Left lung (tissue), 14 donors: ENCODE measurements at regions of chr15 and their contacts with region 1.

Region 1: DNA sequence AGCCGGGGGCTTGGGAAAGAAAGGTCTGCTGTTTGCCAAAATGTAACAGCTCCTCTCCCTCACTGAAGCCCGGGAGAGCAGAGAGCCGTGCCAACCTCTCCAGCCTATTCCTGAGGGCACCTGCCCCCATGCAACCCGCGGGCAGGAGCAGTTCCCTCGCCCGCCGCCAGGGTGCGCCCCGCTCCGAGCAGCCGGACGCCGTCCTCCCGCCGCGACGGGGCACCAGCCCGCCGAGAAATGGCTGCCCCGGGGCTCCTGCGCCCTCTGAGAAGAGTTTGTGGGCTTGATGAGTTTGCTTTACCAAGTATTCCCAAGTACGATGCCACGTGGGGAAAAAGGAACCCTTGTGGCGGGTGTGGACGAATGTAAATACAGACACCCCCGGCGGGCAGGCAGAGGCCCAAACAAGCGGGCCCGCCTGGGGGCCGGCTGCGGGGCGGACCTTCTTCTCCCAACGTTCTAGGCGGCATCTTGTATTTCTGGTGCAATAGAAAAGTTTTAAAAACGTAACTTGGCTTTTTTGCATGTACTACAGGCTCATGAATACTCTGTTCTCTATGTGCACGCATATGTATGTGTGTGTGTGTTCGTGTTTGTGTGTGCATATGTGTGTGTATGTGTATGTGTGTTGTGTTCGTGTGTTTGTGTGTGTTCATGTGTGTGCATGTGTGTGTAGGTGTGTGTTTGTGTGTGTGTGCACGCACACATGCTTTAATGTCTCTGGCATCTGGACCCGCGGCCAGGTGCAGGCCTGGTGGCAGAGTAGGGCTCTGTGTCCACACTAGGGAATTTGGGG is 162.9 kb downstream of the CHSY1 start:
- DNase-seq: peak in 3 of 4 donors; percentile 68 to 98 (median 73)
- ATAC-seq: peak; percentile 95
- H3K4me3 ChIP-seq: no peak overlapping the region
- H3K27ac ChIP-seq: peak overlapping the region in 1 of 2 donors; percentile 69
- H3K4me1 ChIP-seq: peaks cover 26 to 36% of the 10 kb centered on the region in 2 donors
- H3K27me3 ChIP-seq: no peaks in the 10 kb centered on the region
- CTCF ChIP-seq: peak; percentile 100

Region 2: DNA sequence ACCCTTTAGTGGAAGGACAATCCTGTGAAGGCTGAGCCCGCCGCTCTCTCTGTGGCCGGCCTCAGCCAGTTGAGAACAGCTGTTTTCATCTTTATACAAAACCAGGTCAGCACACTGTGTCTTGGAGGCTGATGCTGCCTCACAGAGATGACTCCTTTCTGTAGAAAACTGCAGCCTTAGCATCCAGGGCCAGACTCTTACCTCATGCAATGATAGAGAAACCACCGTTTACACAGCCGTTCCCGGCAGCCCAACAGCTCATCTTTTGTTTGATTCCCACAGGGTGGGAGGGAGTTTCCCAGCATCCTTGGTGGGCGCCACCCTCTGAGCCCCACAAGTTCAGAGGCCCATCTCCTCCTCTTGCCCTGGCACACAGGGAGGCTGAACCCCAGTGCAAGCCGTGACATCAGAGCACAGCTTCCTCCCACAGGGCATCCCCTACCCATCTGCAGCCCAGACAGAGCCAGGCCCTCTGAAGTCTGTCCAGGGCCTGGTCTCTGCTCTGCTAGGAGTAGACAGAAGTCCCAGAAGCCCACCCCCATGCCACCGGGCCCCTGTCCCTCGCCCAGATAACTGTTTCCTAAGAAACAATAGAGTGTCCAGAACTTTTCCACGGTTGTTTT is 64.8 kb before region 1 on chr15:
- intact Hi-C with region 1: loop called in 1 of 2 experiments (anchors 10 kb)
- DNase-seq: peak in 3 of 4 donors; percentile 45 to 79 (median 57)
- ATAC-seq: peak; percentile 80
- H3K4me3 ChIP-seq: no peak overlapping the region
- H3K27ac ChIP-seq: peak overlapping the region; percentile 37 to 80
- H3K4me1 ChIP-seq: peaks cover 0 to 25% of the 10 kb centered on the region in 2 donors
- H3K27me3 ChIP-seq: no peaks in the 10 kb centered on the region
- CTCF ChIP-seq: no peak

Region 3: GRCh38 chr15:101148166-101148880 is 59.3 kb after region 1 on chr15:
- intact Hi-C with region 1: no loop called
- DNase-seq: peak in 1 of 4 donors; percentile 52
- ATAC-seq: no peak
- H3K4me3 ChIP-seq: no peak overlapping the region
- H3K27ac ChIP-seq: no peak overlapping the region
- H3K4me1 ChIP-seq: peaks cover 0 to 29% of the 10 kb centered on the region in 2 donors
- H3K27me3 ChIP-seq: no peaks in the 10 kb centered on the region
- CTCF ChIP-seq: no peak

Region 4: DNA sequence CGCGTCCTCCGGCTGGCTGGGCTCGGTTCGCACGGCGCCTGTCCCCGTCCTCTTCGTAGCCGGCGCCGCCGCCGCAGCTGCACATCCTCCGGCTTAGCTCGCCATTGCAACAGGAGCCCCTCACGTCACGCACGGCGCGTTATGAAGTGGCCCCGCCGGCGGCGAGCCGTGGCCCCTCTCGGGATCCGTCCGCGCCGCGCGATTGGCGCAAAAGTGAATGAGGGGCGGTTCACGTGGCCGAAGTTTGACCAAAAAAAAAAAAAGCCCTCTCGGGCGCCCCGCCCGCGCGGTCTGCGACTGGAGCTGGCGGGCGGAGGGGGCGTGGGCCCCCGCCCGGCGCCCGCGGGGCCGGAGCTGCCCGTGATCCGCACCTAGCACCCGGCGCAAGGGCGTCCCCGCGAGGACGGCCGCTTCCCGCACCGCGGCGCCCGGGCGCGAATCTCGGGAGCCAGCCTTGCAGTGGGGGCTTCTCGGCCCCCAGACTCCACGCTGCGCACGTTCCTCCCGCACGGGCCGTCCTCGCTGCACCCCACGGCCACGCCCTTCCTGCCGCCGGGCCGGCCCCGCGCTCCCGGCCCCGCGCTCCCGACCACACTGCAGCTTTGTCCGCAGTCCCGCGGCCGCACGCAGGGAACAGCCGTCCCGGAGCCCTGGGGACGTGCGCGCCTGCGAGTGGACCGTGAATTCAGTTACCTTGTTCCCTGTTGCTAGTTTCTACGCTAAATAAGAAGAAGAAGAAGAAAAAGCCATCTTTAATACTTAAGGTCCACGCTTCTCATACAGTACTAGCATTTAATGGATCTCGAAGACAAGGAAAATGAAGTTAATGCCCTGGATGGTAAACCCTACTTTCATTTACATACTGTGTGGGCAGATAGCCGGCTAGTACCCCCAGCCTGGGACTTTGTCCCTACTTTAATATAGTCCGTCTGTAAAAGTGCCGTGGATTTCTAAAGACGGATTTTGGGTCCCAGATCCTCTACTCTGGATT is 163.1 kb after region 1 on chr15 and contains the start of gene CHSY1:
- intact Hi-C with region 1: loop called (anchors 5 to 10 kb)
- DNase-seq: peak; percentile 93 to 96 (median 95)
- ATAC-seq: peak; percentile 83
- H3K4me3 ChIP-seq: peak within 1 kb of the TSS; percentile 61 to 89
- H3K27ac ChIP-seq: peak within 1 kb of the TSS; percentile 84 to 92
- H3K4me1 ChIP-seq: peaks cover 14 to 54% of the 10 kb centered on the region in 2 donors
- H3K27me3 ChIP-seq: no peaks in the 10 kb centered on the region
- CTCF ChIP-seq: no peak
- polyA plus RNA-seq, gene CHSY1: 49.8 to 61.5 (median 53.1) TPM

Region 5: GRCh38 chr15:101258238-101259144 is 169.5 kb after region 1 on chr15:
- intact Hi-C with region 1: loop called (anchors 5 to 10 kb)
- DNase-seq: peak in 2 of 4 donors; percentile 62 to 84
- ATAC-seq: peak; percentile 88
- H3K4me3 ChIP-seq: no peak overlapping the region
- H3K27ac ChIP-seq: no peak overlapping the region
- H3K4me1 ChIP-seq: peaks cover 0 to 12% of the 10 kb centered on the region in 2 donors
- H3K27me3 ChIP-seq: no peaks in the 10 kb centered on the region
- CTCF ChIP-seq: peak; percentile 77 to 78